Mammary epithelial cell (primary cell): ENCODE measurements at regions of chr15 and their contacts with region 1.

Region 1: GRCh38 chr15:69058830-69059556 is 44.5 kb downstream of the NOX5 start:
- DNase-seq: peak; percentile 67
- H3K4me3 ChIP-seq: no peak overlapping the region
- H3K27ac ChIP-seq: no peak overlapping the region
- H3K4me1 ChIP-seq: peaks cover 8% of the 10 kb centered on the region
- H3K27me3 ChIP-seq: peaks cover 2% of the 10 kb centered on the region
- CTCF ChIP-seq: peak; percentile 87 to 92

Region 2: GRCh38 chr15:68783226-68784058 is 275.6 kb before region 1 on chr15:
- CTCF ChIA-PET with region 1: no interaction called
- dilution Hi-C with region 1: no loop called
- in situ Hi-C with region 1: no loop called
- intact Hi-C with region 1: loop called (anchors 10 kb)
- DNase-seq: peak; percentile 27
- H3K4me3 ChIP-seq: no peak overlapping the region
- H3K27ac ChIP-seq: no peak overlapping the region
- H3K4me1 ChIP-seq: peaks cover 19% of the 10 kb centered on the region
- H3K27me3 ChIP-seq: no peaks in the 10 kb centered on the region
- CTCF ChIP-seq: peak; percentile 56 to 81

Region 3: GRCh38 chr15:68957696-68958095 is 101.3 kb before region 1 on chr15:
- CTCF ChIA-PET with region 1: no interaction called
- dilution Hi-C with region 1: no loop called
- in situ Hi-C with region 1: no loop called
- intact Hi-C with region 1: no loop called
- DNase-seq: no peak
- H3K4me3 ChIP-seq: no peak overlapping the region
- H3K27ac ChIP-seq: no peak overlapping the region
- H3K4me1 ChIP-seq: no peaks in the 10 kb centered on the region
- H3K27me3 ChIP-seq: no peaks in the 10 kb centered on the region
- CTCF ChIP-seq: no peak

Region 4: GRCh38 chr15:69014454-69014853 is 44.5 kb before region 1 on chr15 and contains the start of gene NOX5:
- CTCF ChIA-PET with region 1: no interaction called
- dilution Hi-C with region 1: no loop called
- in situ Hi-C with region 1: no loop called
- intact Hi-C with region 1: no loop called
- DNase-seq: peak; percentile 67
- H3K4me3 ChIP-seq: no peak within 1 kb of the TSS
- H3K27ac ChIP-seq: no peak within 1 kb of the TSS
- H3K4me1 ChIP-seq: no peaks in the 10 kb centered on the region
- H3K27me3 ChIP-seq: no peaks in the 10 kb centered on the region
- CTCF ChIP-seq: no peak
- total RNA-seq, gene NOX5: 0.05 to 0.50 TPM

Region 5: GRCh38 chr15:69025320-69025719 is 33.7 kb before region 1 on chr15:
- CTCF ChIA-PET with region 1: no interaction called
- dilution Hi-C with region 1: no loop called
- in situ Hi-C with region 1: no loop called
- intact Hi-C with region 1: no loop called
- DNase-seq: no peak
- H3K4me3 ChIP-seq: no peak overlapping the region
- H3K27ac ChIP-seq: no peak overlapping the region
- H3K4me1 ChIP-seq: no peaks in the 10 kb centered on the region
- H3K27me3 ChIP-seq: no peaks in the 10 kb centered on the region
- CTCF ChIP-seq: no peak

Region 6: GRCh38 chr15:69141286-69141701 is 82.3 kb after region 1 on chr15:
- CTCF ChIA-PET with region 1: no interaction called
- dilution Hi-C with region 1: loop called (anchors 5 kb)
- in situ Hi-C with region 1: no loop called
- intact Hi-C with region 1: no loop called
- DNase-seq: no peak
- H3K4me3 ChIP-seq: no peak overlapping the region
- H3K27ac ChIP-seq: no peak overlapping the region
- H3K4me1 ChIP-seq: no peaks in the 10 kb centered on the region
- H3K27me3 ChIP-seq: peaks cover 2% of the 10 kb centered on the region
- CTCF ChIP-seq: no peak

Region 7: DNA sequence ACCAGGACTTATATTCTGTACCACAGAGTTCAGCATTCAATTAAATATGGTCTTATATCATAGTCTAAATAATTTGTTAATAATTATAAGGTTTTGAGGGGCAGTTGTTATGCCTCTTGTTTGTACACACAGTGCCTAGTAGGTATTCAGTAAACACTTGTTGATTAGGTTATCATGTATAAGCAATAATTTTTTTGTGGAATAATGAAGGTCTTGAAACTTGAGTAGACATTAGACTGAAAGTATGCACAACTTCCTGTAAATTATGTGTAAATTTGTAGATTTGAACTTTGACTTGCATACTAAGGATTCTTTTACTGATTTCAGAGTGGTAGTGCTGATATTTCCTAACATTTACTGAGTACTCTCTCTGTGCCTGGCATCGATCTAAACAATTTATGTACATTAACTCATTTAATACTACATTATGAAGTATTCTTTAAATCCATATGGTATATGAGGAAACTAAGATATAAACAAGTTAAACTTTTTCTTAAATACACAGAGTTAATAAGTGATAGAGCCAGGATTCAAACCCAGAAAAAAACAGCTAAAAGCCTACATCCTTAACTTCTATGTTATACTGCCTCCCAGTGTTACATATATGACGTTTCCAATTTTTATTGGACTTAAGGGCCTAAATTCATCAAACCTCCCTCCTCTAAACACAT is 166.5 kb after region 1 on chr15:
- CTCF ChIA-PET with region 1: interaction called, 12 read pairs
- dilution Hi-C with region 1: no loop called
- in situ Hi-C with region 1: no loop called
- intact Hi-C with region 1: loop called (anchors 1 kb)
- DNase-seq: peak; percentile 14
- H3K4me3 ChIP-seq: no peak overlapping the region
- H3K27ac ChIP-seq: no peak overlapping the region
- H3K4me1 ChIP-seq: peaks cover 6% of the 10 kb centered on the region
- H3K27me3 ChIP-seq: no peaks in the 10 kb centered on the region
- CTCF ChIP-seq: peak; percentile 16 to 42

Region 8: GRCh38 chr15:69394556-69395282 is 335.7 kb after region 1 on chr15:
- CTCF ChIA-PET with region 1: no interaction called
- dilution Hi-C with region 1: no loop called
- in situ Hi-C with region 1: no loop called
- intact Hi-C with region 1: loop called (anchors 1 kb)
- DNase-seq: peak; percentile 42
- H3K4me3 ChIP-seq: no peak overlapping the region
- H3K27ac ChIP-seq: peak overlapping the region; percentile 42
- H3K4me1 ChIP-seq: peaks cover 47% of the 10 kb centered on the region
- H3K27me3 ChIP-seq: no peaks in the 10 kb centered on the region
- CTCF ChIP-seq: peak; percentile 84 to 91

Region 9: DNA sequence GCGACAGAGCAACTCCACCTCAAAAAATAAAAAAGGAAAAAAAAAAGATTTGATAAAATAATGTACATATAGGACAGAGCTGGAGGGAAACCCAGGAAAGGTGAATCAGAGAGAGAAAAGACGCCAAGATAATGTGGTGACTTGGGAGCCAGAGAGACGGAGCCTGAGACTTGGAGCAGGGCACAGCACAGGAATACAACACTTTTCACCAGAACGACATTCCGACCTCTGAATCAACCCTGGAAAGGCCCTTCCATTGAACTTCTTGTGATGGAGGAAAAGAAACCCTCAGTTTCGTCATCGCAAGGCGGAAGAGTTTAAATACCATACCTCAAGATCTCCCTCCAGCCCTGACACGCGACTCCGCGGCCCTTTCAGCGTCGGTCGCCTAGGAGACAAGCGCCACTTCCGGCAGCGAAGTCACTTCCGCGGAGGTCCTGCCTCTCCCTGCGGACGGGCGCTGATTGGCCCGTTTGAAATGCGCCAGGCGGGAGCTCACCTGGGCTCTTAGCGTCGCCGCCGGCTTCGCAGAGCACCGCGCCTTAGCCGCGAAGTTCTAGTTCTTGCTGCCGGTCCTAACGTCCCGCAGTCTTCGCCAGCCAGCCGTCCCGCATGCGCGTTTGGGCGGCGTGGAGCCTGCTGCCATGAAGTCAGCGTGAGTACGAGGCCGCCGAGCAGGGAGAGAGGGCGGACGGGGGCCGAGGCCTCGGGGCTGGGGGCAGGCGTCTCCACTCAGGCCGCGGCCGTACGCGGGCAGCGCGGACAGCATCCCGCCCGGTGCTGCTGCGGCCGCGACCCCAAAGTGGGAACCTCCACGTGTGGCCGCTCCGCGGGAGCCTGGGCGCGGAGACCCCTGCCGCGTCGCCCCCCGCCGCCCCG is 355.1 kb after region 1 on chr15 and contains the start of gene KIF23:
- CTCF ChIA-PET with region 1: no interaction called
- dilution Hi-C with region 1: loop called (anchors 10 kb)
- in situ Hi-C with region 1: loop called in 1 of 2 experiments (anchors 10 kb)
- intact Hi-C with region 1: loop called (anchors 1 kb)
- DNase-seq: peak; percentile 96
- H3K4me3 ChIP-seq: peak within 1 kb of the TSS; percentile 76 to 87 (median 87)
- H3K27ac ChIP-seq: peak within 1 kb of the TSS; percentile 85
- H3K4me1 ChIP-seq: peaks cover 24% of the 10 kb centered on the region
- H3K27me3 ChIP-seq: no peaks in the 10 kb centered on the region
- CTCF ChIP-seq: no peak
- total RNA-seq, gene KIF23: 14.7 to 55.8 TPM